Activated naive CD4-positive, alpha-beta T cell treated with anti-CD3 and anti-CD28 coated beads for 36 hours (primary cell): ENCODE measurements at regions of chr6 and their contacts with region 1.

Region 1: DNA sequence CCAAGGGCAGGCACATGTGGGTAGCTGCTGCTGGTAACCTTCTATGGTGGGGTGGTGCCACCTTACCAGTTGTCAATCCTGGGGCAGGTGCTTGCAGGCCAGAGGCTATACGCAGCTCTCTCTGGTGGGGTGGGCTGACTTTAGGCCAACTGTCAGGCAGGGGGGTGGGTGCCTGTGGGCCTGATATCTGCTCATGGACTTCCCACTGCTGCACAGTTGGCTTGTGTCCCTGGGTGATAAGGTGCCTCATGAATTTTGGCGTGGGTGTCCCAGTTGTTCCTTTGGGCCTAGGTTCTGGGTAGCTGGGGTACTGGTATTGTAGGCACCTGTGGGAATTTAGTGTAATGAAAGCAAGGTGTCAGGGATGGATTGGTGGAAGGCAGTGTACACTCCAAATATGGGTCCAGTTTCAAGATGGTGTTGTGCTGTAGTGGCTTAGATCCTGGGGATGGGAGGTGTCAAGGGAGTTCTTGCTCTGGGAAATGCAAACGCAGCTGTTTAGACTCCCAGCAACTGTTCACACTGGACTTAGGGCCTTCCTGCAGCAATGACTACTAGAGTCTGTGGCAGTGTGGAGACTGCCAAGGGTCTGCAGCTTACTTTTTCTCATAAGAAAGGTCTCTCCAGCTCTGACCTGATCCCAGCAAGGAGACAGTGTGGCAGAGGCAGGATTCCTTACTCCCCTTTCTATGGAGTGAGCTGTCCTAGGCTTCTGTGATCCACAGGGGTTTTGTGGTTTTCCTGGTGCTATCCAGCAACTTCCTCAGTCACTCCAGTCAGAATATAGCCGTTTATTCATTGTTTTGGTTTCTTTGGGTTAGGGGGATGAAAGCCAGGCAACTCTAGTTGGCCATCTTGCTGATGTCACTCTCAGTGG is 128.2 kb downstream of the CRYBG1 start:
- DNase-seq: no peak
- H3K4me3 Mint-ChIP-seq: no peak overlapping the region
- H3K27ac Mint-ChIP-seq: no peak overlapping the region
- H3K4me1 Mint-ChIP-seq: peaks cover 7% of the 10 kb centered on the region
- H3K27me3 Mint-ChIP-seq: no peaks in the 10 kb centered on the region

Region 2: GRCh38 chr6:106451439-106451838 is 37.3 kb before region 1 on chr6:
- CTCF ChIA-PET with region 1: no interaction called
- intact Hi-C with region 1: loop called (anchors 1 kb)
- DNase-seq: no peak
- H3K4me3 Mint-ChIP-seq: no peak overlapping the region
- H3K27ac Mint-ChIP-seq: no peak overlapping the region
- H3K4me1 Mint-ChIP-seq: peaks cover 16% of the 10 kb centered on the region
- H3K27me3 Mint-ChIP-seq: no peaks in the 10 kb centered on the region

Region 3: GRCh38 chr6:106501960-106502371 is 13.2 kb after region 1 on chr6:
- CTCF ChIA-PET with region 1: no interaction called
- intact Hi-C with region 1: no loop called
- DNase-seq: no peak
- H3K4me3 Mint-ChIP-seq: no peak overlapping the region
- H3K27ac Mint-ChIP-seq: no peak overlapping the region
- H3K4me1 Mint-ChIP-seq: no peaks in the 10 kb centered on the region
- H3K27me3 Mint-ChIP-seq: no peaks in the 10 kb centered on the region